ENCODE measurements at regions of chr1 and their contacts with region 1.

Region 1: DNA sequence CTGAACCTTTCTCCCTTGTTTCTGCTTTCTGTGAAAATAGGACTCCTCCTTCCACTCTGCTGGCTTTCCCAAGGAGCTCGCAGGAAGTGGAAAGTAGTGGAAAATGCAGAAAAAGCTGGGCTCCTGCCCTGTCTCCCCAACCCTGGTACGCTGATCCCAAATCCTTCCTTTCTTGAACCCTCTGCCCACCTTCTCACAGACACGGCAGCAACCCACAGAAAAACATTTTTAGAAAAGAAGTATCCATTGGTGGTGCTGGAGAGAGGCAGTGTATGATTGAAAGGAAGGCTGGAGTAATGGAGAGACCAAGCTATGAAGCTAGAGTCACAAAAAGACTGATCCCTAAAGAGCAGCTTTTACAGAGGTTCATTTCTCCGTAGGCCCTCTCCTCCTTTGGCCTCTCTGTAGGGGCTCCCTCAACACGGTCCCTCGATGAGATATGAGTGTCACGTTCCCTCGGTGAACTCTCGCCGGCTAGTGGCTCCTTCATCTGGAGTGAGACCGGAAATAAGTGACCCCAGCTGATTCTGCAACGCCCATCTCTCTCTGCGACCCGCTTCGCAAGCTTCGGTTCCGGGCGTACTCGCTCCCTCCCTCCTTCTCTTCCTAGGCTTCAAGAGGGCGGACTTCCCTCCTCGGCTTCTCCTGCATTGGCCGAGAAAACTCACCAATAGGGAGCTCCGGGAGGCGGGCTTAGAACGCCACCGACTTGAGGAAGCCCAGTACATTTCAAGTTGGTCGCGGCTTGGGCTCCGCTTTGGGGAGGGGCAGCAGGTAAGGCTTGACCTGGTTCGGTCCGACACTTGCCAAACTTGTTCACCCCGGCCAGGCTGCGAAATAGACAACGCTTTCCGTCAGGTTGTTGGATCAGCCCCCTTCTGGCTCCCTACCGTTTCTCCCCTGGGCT is at the starts of genes ANKRD34A and POLR3GL:
- DNase-seq: peak; percentile 78
- ATAC-seq: peak; percentile 88
- H3K4me3 Mint-ChIP-seq: peak within 1 kb of the TSS; percentile 97
- H3K27ac Mint-ChIP-seq: peak within 1 kb of the TSS; percentile 96
- H3K4me1 Mint-ChIP-seq: peaks cover 52% of the 10 kb centered on the region
- H3K27me3 Mint-ChIP-seq: no peaks in the 10 kb centered on the region
- CTCF ChIP-seq: no peak
- total RNA-seq, gene ANKRD34A: 1.4 and 2.4 TPM in 2 replicates
- total RNA-seq, gene POLR3GL: 22.7 and 23.7 TPM in 2 replicates

Region 2: DNA sequence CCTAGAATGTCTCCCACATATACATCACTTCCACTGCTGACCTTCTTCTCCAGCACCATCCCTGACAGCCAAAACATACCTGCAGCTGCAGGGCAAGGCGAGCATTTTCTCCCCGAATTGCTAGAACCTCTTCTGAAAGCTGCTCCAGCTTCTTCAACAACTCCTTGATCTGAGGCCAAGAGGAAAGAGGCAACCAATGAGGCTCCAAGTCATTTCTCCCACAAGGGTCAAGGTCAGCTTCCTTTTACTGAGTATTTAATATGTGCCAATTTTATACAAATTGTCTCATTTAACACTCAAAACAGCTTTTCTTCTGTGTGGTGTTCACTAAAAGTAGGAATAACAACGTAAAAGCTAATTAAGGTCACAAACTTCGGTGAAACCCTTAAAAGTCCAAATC is 96.0 kb before region 1 on chr1:
- CTCF ChIA-PET with region 1: no interaction called
- POLR2A ChIA-PET with region 1: no interaction called
- intact Hi-C with region 1: no loop called
- DNase-seq: no peak
- ATAC-seq: no peak
- H3K4me3 Mint-ChIP-seq: no peak overlapping the region
- H3K27ac Mint-ChIP-seq: no peak overlapping the region
- H3K4me1 Mint-ChIP-seq: peaks cover 11% of the 10 kb centered on the region
- H3K27me3 Mint-ChIP-seq: peaks cover 18% of the 10 kb centered on the region
- CTCF ChIP-seq: no peak

Region 3: DNA sequence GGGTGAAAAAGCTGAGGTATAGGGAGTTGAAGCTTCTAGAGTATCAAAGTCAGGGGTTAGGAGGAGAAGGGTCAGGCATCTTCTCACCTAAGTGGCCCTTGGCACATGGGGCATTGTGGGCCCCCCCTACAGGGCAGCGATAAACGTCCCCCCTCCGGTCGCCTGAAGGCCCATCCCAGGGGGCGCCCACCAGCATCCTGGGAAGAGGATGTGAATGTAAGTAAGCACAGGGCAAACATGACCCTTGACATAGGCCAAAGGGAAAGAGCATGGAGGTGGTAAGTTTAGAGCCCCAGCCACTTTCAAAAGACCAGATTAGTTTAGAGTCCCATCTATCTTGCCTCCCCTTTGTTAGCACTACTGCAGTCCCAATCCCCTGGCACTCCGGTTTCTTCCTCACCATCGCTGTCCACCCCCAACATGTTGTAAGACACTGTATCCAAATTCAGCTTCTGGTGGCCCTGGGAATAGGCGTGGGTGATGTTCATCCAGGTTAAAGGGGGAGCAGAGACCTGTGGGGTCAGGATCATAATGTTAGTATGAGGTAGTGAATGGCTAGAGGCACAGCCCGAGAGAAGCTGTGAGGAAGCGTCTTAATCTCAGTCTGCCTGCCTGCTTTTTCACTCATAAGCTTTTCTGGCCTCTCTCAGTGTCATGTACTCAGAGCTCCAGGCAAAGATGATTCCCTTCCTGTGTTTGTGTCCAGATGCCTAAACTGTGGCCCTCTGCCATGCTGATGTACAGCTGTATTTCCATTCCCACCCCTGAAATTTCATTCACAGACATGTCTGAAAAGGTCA is 57.1 kb before region 1 on chr1:
- CTCF ChIA-PET with region 1: interaction called, 4 read pairs
- POLR2A ChIA-PET with region 1: interaction called, 11 read pairs
- intact Hi-C with region 1: no loop called
- DNase-seq: no peak
- ATAC-seq: no peak
- H3K4me3 Mint-ChIP-seq: no peak overlapping the region
- H3K27ac Mint-ChIP-seq: no peak overlapping the region
- H3K4me1 Mint-ChIP-seq: peaks cover 5% of the 10 kb centered on the region
- H3K27me3 Mint-ChIP-seq: no peaks in the 10 kb centered on the region
- CTCF ChIP-seq: no peak

Region 4: GRCh38 chr1:145918144-145918992 is 45.9 kb before region 1 on chr1 and contains the start of gene PEX11B:
- CTCF ChIA-PET with region 1: interaction called, 4 read pairs
- POLR2A ChIA-PET with region 1: interaction called, 61 read pairs
- intact Hi-C with region 1: no loop called
- DNase-seq: peak; percentile 88
- ATAC-seq: peak; percentile 90
- H3K4me3 Mint-ChIP-seq: peak within 1 kb of the TSS; percentile 95
- H3K27ac Mint-ChIP-seq: peak within 1 kb of the TSS; percentile 93
- H3K4me1 Mint-ChIP-seq: peaks cover 35% of the 10 kb centered on the region
- H3K27me3 Mint-ChIP-seq: no peaks in the 10 kb centered on the region
- CTCF ChIP-seq: no peak
- total RNA-seq, gene PEX11B: 42.7 and 47.7 TPM in 2 replicates

Region 5: GRCh38 chr1:146036965-146037646 is 72.9 kb after region 1 on chr1:
- CTCF ChIA-PET with region 1: interaction called, 4 read pairs
- POLR2A ChIA-PET with region 1: interaction called, 59 read pairs
- intact Hi-C with region 1: no loop called
- DNase-seq: peak; percentile 61
- ATAC-seq: peak; percentile 56
- H3K4me3 Mint-ChIP-seq: peak overlapping the region; percentile 99
- H3K27ac Mint-ChIP-seq: peak overlapping the region; percentile 98
- H3K4me1 Mint-ChIP-seq: peaks cover 43% of the 10 kb centered on the region
- H3K27me3 Mint-ChIP-seq: peaks cover 2% of the 10 kb centered on the region
- CTCF ChIP-seq: no peak

Region 6: DNA sequence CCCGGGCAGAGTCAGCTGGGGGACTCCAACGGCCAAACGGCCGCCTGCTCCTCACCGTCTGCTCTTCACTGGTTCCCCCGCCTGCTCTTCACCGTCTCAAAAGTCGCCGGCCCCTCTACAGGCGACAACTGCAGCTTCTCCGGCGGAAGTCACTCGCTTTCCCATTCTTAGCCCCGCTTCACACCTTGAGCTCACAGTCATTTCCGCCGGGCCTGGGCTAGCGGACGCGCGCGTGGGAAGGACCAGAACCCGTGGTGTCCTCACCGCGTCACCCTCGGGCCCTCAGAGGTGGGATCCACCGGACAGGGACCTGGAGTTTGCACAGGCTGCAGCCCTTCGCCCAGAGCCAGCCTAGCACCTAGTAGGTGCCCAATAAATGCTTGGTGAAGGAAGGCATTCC is 85.2 kb after region 1 on chr1:
- CTCF ChIA-PET with region 1: no interaction called
- POLR2A ChIA-PET with region 1: interaction called, 21 read pairs
- intact Hi-C with region 1: no loop called
- DNase-seq: no peak
- ATAC-seq: no peak
- H3K4me3 Mint-ChIP-seq: no peak overlapping the region
- H3K27ac Mint-ChIP-seq: no peak overlapping the region
- H3K4me1 Mint-ChIP-seq: peaks cover 22% of the 10 kb centered on the region
- H3K27me3 Mint-ChIP-seq: no peaks in the 10 kb centered on the region
- CTCF ChIP-seq: no peak